A549 (cell line): ENCODE measurements at regions of chr5 and their contacts with region 1.

Region 1: GRCh38 chr5:112995764-112996618 is 19.4 kb downstream of the DCP2 start:
- DNase-seq: peak; percentile 46 to 64
- ATAC-seq: peak; percentile 90 to 94
- H3K4me3 ChIP-seq: no peak overlapping the region
- H3K27ac ChIP-seq: no peak overlapping the region
- H3K4me1 ChIP-seq: no peaks in the 10 kb centered on the region
- CTCF ChIP-seq: peak; percentile 88
- EP300 ChIP-seq: no peak
- POLR2A ChIP-seq: no peak
- RAD21 ChIP-seq: peak; percentile 85

Region 2: DNA sequence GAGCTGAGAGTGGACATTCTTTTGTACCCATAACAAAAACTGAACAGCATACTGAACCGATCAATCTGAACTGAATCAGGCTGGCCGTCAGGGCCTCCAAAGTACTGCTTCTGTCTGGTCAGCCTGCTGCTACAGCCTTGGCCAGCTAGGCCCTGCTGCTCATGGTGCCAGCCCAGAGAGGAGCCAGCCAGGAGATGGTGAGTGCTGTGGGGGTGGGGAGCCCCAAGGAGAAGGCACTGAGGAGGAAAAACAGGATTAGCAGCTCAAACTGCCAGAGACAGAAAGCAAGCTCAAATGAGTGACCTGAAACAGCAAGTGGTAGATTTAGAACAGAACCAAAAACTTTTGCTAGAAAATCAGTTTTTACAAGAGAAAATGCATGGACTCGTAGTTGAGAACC is 111.0 kb before region 1 on chr5:
- CTCF ChIA-PET with region 1: no interaction called
- POLR2A ChIA-PET with region 1: no interaction called
- DNase-seq: no peak
- ATAC-seq: no peak
- H3K4me3 ChIP-seq: no peak overlapping the region
- H3K27ac ChIP-seq: no peak overlapping the region
- H3K4me1 ChIP-seq: no peaks in the 10 kb centered on the region
- CTCF ChIP-seq: no peak
- EP300 ChIP-seq: no peak
- POLR2A ChIP-seq: no peak
- RAD21 ChIP-seq: no peak

Region 3: DNA sequence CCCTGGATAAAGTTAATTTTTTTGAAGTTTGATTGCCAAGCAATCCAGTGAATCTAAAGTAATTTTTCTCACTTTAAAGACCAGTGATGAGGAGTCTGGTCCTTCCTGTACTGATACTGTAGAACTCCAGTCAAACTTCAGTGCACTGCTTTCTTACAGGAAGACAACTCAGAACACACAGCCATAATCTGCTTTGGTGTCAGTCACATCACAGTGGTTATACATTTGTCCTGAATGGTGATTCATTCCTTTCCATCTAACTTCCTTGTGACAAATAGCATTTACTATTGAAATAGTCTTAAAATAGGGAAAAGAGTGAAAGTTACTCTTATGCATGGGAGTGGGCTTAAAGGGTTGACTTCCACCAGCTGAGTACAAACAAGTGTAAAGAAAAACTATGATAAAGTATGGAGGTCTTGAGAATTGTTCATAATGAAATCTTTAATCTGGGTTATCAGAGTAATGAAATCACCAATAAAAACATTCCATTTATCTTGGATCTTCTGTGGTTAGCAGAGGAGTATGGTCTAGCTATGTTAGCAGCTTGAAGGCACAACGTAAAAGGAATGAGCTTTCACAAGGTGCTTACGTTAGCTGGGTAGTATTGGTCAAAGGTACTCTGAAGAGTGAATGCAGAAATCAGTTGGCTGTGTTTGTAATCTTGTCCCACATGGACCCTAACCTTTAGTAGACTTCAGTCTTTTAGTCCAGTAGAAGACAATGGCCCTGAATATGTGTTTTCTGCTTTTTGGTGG is 22.1 kb after region 1 on chr5:
- CTCF ChIA-PET with region 1: interaction called, 13 read pairs
- POLR2A ChIA-PET with region 1: no interaction called
- DNase-seq: no peak
- ATAC-seq: no peak
- H3K4me3 ChIP-seq: no peak overlapping the region
- H3K27ac ChIP-seq: no peak overlapping the region
- H3K4me1 ChIP-seq: peaks cover 10% of the 10 kb centered on the region; the same call in 2 of the 3 replicates
- CTCF ChIP-seq: no peak
- EP300 ChIP-seq: no peak
- POLR2A ChIP-seq: no peak
- RAD21 ChIP-seq: no peak

Region 4: GRCh38 chr5:113330533-113331208 is 334.7 kb after region 1 on chr5:
- CTCF ChIA-PET with region 1: interaction called, 18 read pairs
- POLR2A ChIA-PET with region 1: no interaction called
- DNase-seq: peak; percentile 14 to 20
- ATAC-seq: peak; percentile 39 to 66; a peak in 4 of 6 replicates
- H3K4me3 ChIP-seq: no peak overlapping the region
- H3K27ac ChIP-seq: no peak overlapping the region
- H3K4me1 ChIP-seq: no peaks in the 10 kb centered on the region
- CTCF ChIP-seq: peak; percentile 41
- EP300 ChIP-seq: no peak
- POLR2A ChIP-seq: no peak
- RAD21 ChIP-seq: peak; percentile 46 to 64; a peak in 4 of 5 replicates

Region 5: GRCh38 chr5:113487781-113488644 is 492.0 kb after region 1 on chr5 and contains the start of gene MCC:
- CTCF ChIA-PET with region 1: interaction called, 11 read pairs
- POLR2A ChIA-PET with region 1: no interaction called
- DNase-seq: peak; percentile 70 to 71
- ATAC-seq: peak; percentile 87 to 91
- H3K4me3 ChIP-seq: peak within 1 kb of the TSS; percentile 57
- H3K27ac ChIP-seq: peak within 1 kb of the TSS in 1 of 2 experiments; percentile 66; a peak in 4 of 6 replicates
- H3K4me1 ChIP-seq: peaks cover 7% of the 10 kb centered on the region; the same call in 2 of the 3 replicates
- CTCF ChIP-seq: no peak
- EP300 ChIP-seq: no peak
- POLR2A ChIP-seq: no peak
- RAD21 ChIP-seq: no peak
- polyA plus RNA-seq, gene MCC: 0.09 and 0.22 TPM in 2 replicates

Region 6: DNA sequence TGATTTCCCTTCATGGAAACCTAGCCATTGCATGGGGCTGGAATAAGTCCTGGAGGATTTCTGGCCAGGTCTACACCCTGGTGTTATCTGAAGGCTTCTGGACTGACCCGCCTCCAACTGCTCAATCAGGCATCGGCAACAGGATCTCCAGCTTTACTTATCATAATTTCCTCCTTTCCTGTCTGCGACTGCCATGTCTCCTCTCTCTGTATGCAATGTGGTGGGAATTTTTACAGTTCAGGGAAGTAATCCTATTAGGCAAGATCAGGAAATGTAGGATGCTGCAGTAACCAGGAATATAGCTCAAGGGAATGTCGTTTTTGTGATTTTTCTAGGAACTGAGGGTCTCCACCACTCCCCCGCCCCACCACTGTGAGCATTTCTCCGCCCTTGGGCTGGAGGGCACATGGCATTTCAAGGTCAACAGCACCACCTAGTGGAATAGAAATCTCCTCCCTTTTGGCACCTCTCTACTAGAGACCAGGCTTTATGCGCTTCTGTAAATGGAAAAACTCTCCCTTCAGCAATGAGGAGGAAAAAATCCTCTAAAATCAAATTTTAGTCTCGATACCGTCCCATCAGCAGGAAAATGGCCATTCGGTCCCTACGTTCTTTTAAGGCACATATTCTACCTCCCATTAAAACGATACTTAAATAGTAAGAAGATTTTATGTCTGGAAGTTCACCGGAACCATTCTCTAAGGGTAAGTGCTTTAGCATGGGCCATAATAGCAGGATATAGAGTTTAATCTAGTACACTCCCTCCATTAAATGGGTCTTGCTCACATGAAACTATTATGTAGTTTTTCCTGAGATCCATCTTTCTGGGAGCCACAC is 610.5 kb after region 1 on chr5:
- CTCF ChIA-PET with region 1: interaction called, 26 read pairs
- POLR2A ChIA-PET with region 1: no interaction called
- DNase-seq: peak; percentile 19 to 48
- ATAC-seq: peak; percentile 92 to 99
- H3K4me3 ChIP-seq: no peak overlapping the region; the same call in 2 of the 3 replicates
- H3K27ac ChIP-seq: no peak overlapping the region
- H3K4me1 ChIP-seq: no peaks in the 10 kb centered on the region
- CTCF ChIP-seq: peak; percentile 81
- EP300 ChIP-seq: no peak
- POLR2A ChIP-seq: no peak
- RAD21 ChIP-seq: peak; percentile 88 to 92